GM12878 (cell line): ENCODE measurements at regions of chr1 and their contacts with region 1.

Region 1: GRCh38 chr1:214337511-214337910 is 56.6 kb downstream of the SMYD2 start:
- DNase-seq: no peak
- ATAC-seq: no peak
- H3K4me3 ChIP-seq: no peak overlapping the region
- H3K27ac ChIP-seq: no peak overlapping the region
- H3K4me1 ChIP-seq: no peaks in the 10 kb centered on the region
- H3K27me3 ChIP-seq: no peaks in the 10 kb centered on the region
- CTCF ChIP-seq: no peak
- EP300 ChIP-seq: no peak
- POLR2A ChIP-seq: no peak
- RAD21 ChIP-seq: no peak

Region 2: DNA sequence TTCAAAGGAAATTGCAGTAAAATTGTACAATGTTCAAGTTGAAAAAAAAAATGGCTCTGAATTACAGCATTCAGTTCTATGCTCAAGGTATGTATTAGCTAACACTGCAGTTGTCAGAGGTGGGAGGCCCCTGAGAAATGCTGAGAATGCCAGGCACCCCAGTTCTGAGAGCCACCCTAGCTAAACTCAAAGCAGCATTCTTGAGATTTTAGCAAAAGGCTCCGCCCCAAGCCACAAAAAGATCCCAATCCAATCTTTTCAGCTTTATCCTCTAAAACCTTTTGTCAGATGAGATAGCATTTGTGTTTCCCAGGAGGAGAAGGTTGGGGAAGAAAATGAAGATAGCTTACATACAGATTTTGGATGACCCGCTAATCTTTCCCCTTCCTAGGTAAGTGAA is 12.3 kb after region 1 on chr1:
- CTCF ChIA-PET with region 1: interaction called, 20 read pairs
- POLR2A ChIA-PET with region 1: no interaction called
- RAD21 ChIA-PET with region 1: interaction called, 3 read pairs
- SMC1A ChIA-PET with region 1: interaction called, 8 read pairs
- in situ Hi-C with region 1: no loop called
- intact Hi-C with region 1: no loop called
- DNase-seq: no peak
- ATAC-seq: no peak
- H3K4me3 ChIP-seq: no peak overlapping the region
- H3K27ac ChIP-seq: no peak overlapping the region
- H3K4me1 ChIP-seq: no peaks in the 10 kb centered on the region
- H3K27me3 ChIP-seq: peaks cover 0 to 2% of the 10 kb centered on the region in 2 experiments; a peak in 1 of 4 replicates
- CTCF ChIP-seq: no peak
- EP300 ChIP-seq: no peak
- POLR2A ChIP-seq: no peak
- RAD21 ChIP-seq: no peak